Sigmoid colon (tissue), 7 donors: ENCODE measurements at regions of chr5 and their contacts with region 1.

Region 1: GRCh38 chr5:61933787-61934626 is 372.0 kb upstream of the KIF2A start:
- DNase-seq: no peak
- H3K4me3 ChIP-seq: no peak overlapping the region
- H3K27ac ChIP-seq: no peak overlapping the region
- H3K4me1 ChIP-seq: peaks cover 0 to 9% (median 1%) of the 10 kb centered on the region in 4 donors
- H3K27me3 ChIP-seq: no peaks in the 10 kb centered on the region
- CTCF ChIP-seq: peak; percentile 53 to 74 (median 62)
- EP300 ChIP-seq: no peak
- POLR2A ChIP-seq: no peak

Region 2: DNA sequence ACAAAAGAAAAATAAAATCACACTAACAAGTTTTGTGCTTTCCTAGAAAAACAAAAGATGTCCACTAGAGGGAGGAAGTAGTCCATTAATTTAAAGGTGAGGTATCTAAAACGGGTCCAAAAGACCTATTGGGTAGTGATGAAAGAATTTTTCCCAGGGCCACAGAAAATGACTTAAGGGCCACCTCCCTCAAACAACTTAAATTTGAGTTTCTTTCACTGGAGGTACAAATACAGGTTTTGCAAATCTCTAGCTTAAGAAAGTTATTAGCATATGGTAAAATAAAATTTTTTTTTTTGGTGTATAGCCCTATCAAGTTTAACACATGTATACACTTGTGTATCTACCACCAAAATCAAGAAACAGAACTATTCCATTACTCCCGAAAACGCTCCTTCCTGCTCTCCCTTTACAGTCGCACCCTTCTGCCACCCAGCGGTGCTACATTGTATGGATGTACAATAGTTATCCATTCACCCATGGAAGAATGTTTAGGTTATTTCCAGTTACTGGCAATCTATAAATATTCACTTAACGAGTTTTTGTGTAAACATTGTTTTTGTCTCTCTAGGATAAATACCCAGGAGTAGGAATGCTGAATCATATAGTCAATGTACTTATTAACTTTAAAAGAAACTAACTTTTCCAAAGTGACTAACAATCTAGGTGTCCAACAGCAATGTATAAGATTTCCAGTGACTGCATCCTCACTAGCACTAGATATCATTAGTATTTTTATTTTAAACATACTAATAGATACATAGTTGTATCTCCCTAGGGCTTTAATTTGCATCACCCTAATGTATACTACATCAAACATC is 1256.0 kb before region 1 on chr5:
- intact Hi-C with region 1: loop called (anchors 5 kb)
- DNase-seq: no peak
- H3K4me3 ChIP-seq: no peak overlapping the region
- H3K27ac ChIP-seq: no peak overlapping the region
- H3K4me1 ChIP-seq: no peaks in the 10 kb centered on the region
- H3K27me3 ChIP-seq: no peaks in the 10 kb centered on the region
- CTCF ChIP-seq: peak in 2 of 4 experiments; percentile 29 to 46
- EP300 ChIP-seq: no peak
- POLR2A ChIP-seq: no peak

Region 3: GRCh38 chr5:60959156-60959555 is 974.9 kb before region 1 on chr5:
- intact Hi-C with region 1: loop called (anchors 5 kb)
- DNase-seq: no peak
- H3K4me3 ChIP-seq: no peak overlapping the region
- H3K27ac ChIP-seq: no peak overlapping the region
- H3K4me1 ChIP-seq: no peaks in the 10 kb centered on the region
- H3K27me3 ChIP-seq: no peaks in the 10 kb centered on the region
- CTCF ChIP-seq: peak in 1 of 4 experiments; percentile 7
- EP300 ChIP-seq: no peak
- POLR2A ChIP-seq: no peak